ENCODE measurements at regions of chr6 and their contacts with region 1.

Region 1: DNA sequence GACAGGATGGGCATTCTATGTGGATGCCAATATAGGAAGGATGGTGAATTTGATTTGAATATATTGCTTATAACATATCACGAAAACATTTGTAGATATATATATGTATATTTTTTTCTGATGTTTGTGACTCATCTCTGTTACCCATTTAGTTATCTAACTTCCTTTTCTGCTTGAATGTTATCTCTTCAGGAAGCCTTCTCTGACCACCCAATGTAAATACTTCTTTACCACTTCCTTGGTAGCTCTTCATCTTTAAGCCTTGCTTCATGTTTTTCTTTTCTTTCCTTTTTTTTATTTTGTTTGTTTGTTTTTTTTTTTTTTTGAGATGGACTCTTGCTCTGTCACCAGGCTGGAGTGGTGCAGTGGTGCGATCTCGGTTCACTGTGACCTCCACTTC is 260.5 kb upstream of the EPHA7 start:
- DNase-seq: no peak
- H3K4me3 ChIP-seq: no peak overlapping the region
- H3K27ac ChIP-seq: no peak overlapping the region
- H3K4me1 ChIP-seq: no peaks in the 10 kb centered on the region
- H3K27me3 ChIP-seq: no peaks in the 10 kb centered on the region
- CTCF ChIP-seq: no peak

Region 2: GRCh38 chr6:94217836-94218235 is 538.0 kb after region 1 on chr6:
- CTCF ChIA-PET with region 1: interaction called, 13 read pairs
- POLR2A ChIA-PET with region 1: no interaction called
- intact Hi-C with region 1: no loop called
- DNase-seq: no peak
- H3K4me3 ChIP-seq: no peak overlapping the region
- H3K27ac ChIP-seq: no peak overlapping the region
- H3K4me1 ChIP-seq: no peaks in the 10 kb centered on the region
- H3K27me3 ChIP-seq: no peaks in the 10 kb centered on the region
- CTCF ChIP-seq: no peak